ENCODE measurements at regions of chr10 and their contacts with region 1.

Region 1: GRCh38 chr10:26881600-26882331 is 21.0 kb upstream of the ABI1 start:
- DNase-seq: no peak
- ATAC-seq: peak; percentile 95
- H3K4me3 Mint-ChIP-seq: no peak overlapping the region
- H3K27ac Mint-ChIP-seq: no peak overlapping the region
- H3K4me1 Mint-ChIP-seq: no peaks in the 10 kb centered on the region
- H3K27me3 Mint-ChIP-seq: peaks cover 8% of the 10 kb centered on the region

Region 2: DNA sequence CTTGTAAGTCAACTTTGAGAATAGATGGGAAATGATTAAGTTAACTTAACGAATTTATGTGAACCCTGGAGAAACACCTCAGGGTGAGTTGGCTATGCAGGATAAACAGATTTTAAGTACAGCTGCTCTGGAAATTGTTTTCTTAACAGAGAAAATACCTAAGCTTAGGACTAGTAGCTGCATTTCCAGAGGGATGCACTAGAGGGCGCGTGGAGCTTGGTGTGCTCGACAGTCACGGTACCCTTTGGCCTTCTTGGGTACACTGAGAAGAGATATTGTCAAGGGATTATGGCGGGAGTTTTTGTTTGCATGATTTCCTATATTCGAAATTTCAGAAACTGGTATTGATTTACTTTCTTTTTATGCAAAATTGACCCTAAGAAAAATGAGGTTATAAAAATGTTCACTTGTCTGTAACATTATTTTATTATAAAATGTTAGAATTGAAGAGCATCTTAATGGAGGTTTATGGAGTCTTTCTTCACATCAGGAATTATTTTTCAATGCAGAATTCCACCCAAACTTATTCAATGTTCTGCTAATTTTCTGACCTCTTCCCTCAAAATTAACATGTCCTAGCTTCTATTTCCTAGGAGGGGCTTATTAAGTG is 1006.1 kb before region 1 on chr10:
- CTCF ChIA-PET with region 1: no interaction called
- POLR2A ChIA-PET with region 1: no interaction called
- intact Hi-C with region 1: loop called in 1 of 2 experiments (anchors 5 kb)
- DNase-seq: peak; percentile 84
- ATAC-seq: peak; percentile 58
- H3K4me3 Mint-ChIP-seq: no peak overlapping the region
- H3K27ac Mint-ChIP-seq: no peak overlapping the region
- H3K4me1 Mint-ChIP-seq: no peaks in the 10 kb centered on the region
- H3K27me3 Mint-ChIP-seq: peaks cover 2% of the 10 kb centered on the region

Region 3: GRCh38 chr10:26612151-26612915 is 269.4 kb before region 1 on chr10:
- CTCF ChIA-PET with region 1: interaction called, 3 read pairs
- POLR2A ChIA-PET with region 1: no interaction called
- intact Hi-C with region 1: loop called in 1 of 2 experiments (anchors 2 kb)
- DNase-seq: no peak
- ATAC-seq: peak; percentile 42
- H3K4me3 Mint-ChIP-seq: no peak overlapping the region
- H3K27ac Mint-ChIP-seq: no peak overlapping the region
- H3K4me1 Mint-ChIP-seq: no peaks in the 10 kb centered on the region
- H3K27me3 Mint-ChIP-seq: no peaks in the 10 kb centered on the region

Region 4: DNA sequence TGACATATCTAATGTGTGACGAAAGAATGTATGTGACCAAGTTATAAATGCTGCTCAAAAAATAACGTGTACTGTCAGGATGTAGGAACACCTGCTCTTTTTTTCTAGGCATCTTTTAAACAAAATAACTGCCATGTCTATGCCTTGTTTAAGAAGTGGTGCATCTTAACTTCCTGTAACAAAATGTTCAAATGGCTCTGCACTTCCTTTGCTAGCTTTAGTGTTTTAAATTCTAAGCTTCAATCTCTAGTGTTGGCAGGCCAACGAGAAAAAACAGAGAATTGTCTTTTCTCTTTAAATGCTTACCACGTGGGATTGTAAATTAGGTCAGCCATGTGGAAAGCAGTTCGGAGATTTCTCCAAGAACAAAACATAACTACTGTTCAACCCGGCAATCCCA is 198.8 kb before region 1 on chr10:
- CTCF ChIA-PET with region 1: interaction called, 4 read pairs
- POLR2A ChIA-PET with region 1: interaction called, 8 read pairs
- intact Hi-C with region 1: loop called (anchors 2 to 5 kb)
- DNase-seq: no peak
- ATAC-seq: no peak
- H3K4me3 Mint-ChIP-seq: no peak overlapping the region
- H3K27ac Mint-ChIP-seq: peak overlapping the region; percentile 63
- H3K4me1 Mint-ChIP-seq: peaks cover 27% of the 10 kb centered on the region
- H3K27me3 Mint-ChIP-seq: no peaks in the 10 kb centered on the region

Region 5: DNA sequence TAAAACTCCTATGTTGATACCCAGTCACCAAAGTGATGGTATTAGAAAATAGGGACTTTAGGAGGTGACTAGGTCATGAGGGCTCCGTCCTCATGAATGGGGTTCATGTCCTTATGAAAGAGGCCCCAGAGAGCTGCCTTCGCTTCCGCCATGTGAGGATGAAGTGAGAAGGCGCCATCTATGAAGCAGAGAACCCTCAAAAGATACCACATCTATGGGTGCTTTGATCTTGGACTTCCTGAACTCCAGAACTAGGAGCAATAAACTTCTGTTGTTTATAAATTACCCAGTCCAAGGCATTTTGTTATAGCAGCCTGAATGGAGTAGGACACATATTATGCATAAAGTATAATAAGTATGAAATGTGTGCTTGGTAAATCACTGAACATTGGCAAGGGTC is 192.4 kb before region 1 on chr10:
- CTCF ChIA-PET with region 1: interaction called, 4 read pairs
- POLR2A ChIA-PET with region 1: no interaction called
- intact Hi-C with region 1: loop called (anchors 2 to 5 kb)
- DNase-seq: no peak
- ATAC-seq: no peak
- H3K4me3 Mint-ChIP-seq: no peak overlapping the region
- H3K27ac Mint-ChIP-seq: no peak overlapping the region
- H3K4me1 Mint-ChIP-seq: peaks cover 24% of the 10 kb centered on the region
- H3K27me3 Mint-ChIP-seq: no peaks in the 10 kb centered on the region

Measured in activated CD4-positive, alpha-beta T cell treated with anti-CD3 and anti-CD28 coated beads for 36 hours (primary cell).